ENCODE measurements at regions of chr5 and their contacts with region 1.

Region 1: GRCh38 chr5:149371296-149371962 is 7.7 kb downstream of the IL17B start:
- DNase-seq: peak; percentile 68
- ATAC-seq: peak; percentile 82

Region 2: GRCh38 chr5:149264439-149265067 is 106.9 kb before region 1 on chr5:
- intact Hi-C with region 1: loop called (anchors 2 kb)
- DNase-seq: no peak
- ATAC-seq: peak; percentile 45

Region 3: DNA sequence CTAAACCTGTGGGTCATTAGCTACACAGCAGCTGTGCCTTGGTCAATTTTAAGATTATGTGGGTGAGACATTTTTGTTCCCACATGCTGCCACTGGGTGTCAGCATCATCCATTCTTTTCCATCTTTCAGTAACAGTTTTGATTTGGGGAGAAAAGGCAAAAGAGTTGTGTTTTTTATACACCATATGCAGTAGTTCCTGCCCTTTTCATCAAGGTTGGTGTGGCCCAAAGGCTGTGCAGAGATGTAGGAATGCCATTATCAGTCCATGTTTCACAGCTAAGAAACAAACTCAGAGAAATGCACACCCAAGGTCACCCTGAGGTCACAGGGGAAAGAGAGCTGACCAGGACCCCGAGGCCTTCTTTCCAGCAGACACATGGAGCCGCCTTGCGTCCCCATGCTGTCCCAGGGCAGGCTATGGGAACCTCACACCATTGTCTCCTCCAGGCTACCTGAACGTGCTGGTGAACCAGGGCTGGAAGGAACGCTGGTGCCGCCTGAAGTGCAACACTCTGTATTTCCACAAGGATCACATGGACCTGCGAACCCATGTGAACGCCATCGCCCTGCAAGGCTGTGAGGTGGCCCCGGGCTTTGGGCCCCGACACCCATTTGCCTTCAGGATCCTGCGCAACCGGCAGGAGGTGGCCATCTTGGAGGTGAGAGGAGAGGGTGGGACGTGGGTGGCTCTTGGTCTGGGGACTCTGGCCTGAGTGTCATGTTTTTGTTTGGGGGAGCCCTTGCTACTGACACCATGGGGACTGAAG is 54.0 kb before region 1 on chr5:
- intact Hi-C with region 1: loop called (anchors 5 kb)
- DNase-seq: no peak
- ATAC-seq: no peak

Measured in Right ventricle myocardium superior (tissue), 1 donor.